Natural killer cell (primary cell): ENCODE measurements at regions of chr7 and their contacts with region 1.

Region 1: GRCh38 chr7:5622286-5622685 is 159.2 kb downstream of the RNF216 start:
- DNase-seq: no peak
- ATAC-seq: no peak
- H3K4me3 ChIP-seq: no peak overlapping the region
- H3K4me3 Mint-ChIP-seq: no peak overlapping the region
- H3K27ac ChIP-seq: no peak overlapping the region
- H3K27ac Mint-ChIP-seq: no peak overlapping the region
- H3K4me1 ChIP-seq: no peaks in the 10 kb centered on the region
- H3K4me1 Mint-ChIP-seq: peaks cover 0 to 7% of the 10 kb centered on the region in 2 donors
- H3K27me3 ChIP-seq: no peaks in the 10 kb centered on the region
- H3K27me3 Mint-ChIP-seq: no peaks in the 10 kb centered on the region
- CTCF ChIP-seq: no peak

Region 2: GRCh38 chr7:5441840-5442503 is 180.3 kb before region 1 on chr7:
- intact Hi-C with region 1: no loop called
- DNase-seq: no peak
- ATAC-seq: no peak
- H3K4me3 ChIP-seq: no peak overlapping the region
- H3K4me3 Mint-ChIP-seq: no peak overlapping the region
- H3K27ac ChIP-seq: no peak overlapping the region
- H3K27ac Mint-ChIP-seq: no peak overlapping the region
- H3K4me1 ChIP-seq: no peaks in the 10 kb centered on the region
- H3K4me1 Mint-ChIP-seq: no peaks in the 10 kb centered on the region
- H3K27me3 ChIP-seq: no peaks in the 10 kb centered on the region
- H3K27me3 Mint-ChIP-seq: no peaks in the 10 kb centered on the region
- CTCF ChIP-seq: no peak

Region 3: DNA sequence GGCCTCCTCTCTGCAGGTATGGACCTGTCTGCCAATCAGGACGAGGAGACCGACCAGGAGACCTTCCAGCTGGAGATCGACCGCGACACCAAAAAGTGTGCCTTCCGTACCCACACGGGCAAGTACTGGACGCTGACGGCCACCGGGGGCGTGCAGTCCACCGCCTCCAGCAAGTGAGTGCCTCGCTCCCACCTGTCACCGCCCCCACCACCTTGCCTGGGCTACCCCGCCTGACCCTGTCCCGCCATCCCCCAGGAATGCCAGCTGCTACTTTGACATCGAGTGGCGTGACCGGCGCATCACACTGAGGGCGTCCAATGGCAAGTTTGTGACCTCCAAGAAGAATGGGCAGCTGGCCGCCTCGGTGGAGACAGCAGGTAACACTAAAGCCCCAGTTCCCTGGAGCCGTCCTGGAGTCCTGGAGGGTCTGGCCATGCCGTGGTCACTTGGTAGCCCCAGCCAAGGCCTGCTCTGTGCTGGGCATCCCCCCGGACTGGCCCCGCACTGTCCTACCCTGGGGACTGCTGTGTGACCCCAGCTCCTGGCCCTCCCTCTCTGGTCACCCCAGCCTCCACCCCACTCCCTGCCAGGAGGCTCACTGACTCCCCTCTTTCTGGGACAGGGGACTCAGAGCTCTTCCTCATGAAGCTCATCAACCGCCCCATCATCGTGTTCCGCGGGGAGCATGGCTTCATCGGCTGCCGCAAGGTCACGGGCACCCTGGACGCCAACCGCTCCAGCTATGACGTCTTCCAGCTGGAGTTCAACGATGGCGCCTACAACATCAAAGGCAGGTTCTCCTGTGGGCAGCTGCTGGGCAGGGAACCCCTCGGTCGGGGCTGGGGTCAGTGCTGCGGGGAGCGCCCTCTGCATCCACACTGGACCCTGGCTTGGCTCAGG is 18.8 kb before region 1 on chr7:
- intact Hi-C with region 1: loop called (anchors 1 kb)
- DNase-seq: no peak
- ATAC-seq: no peak
- H3K4me3 ChIP-seq: no peak overlapping the region
- H3K4me3 Mint-ChIP-seq: no peak overlapping the region
- H3K27ac ChIP-seq: no peak overlapping the region
- H3K27ac Mint-ChIP-seq: no peak overlapping the region
- H3K4me1 ChIP-seq: no peaks in the 10 kb centered on the region
- H3K4me1 Mint-ChIP-seq: no peaks in the 10 kb centered on the region
- H3K27me3 ChIP-seq: no peaks in the 10 kb centered on the region
- H3K27me3 Mint-ChIP-seq: no peaks in the 10 kb centered on the region
- CTCF ChIP-seq: no peak

Region 4: DNA sequence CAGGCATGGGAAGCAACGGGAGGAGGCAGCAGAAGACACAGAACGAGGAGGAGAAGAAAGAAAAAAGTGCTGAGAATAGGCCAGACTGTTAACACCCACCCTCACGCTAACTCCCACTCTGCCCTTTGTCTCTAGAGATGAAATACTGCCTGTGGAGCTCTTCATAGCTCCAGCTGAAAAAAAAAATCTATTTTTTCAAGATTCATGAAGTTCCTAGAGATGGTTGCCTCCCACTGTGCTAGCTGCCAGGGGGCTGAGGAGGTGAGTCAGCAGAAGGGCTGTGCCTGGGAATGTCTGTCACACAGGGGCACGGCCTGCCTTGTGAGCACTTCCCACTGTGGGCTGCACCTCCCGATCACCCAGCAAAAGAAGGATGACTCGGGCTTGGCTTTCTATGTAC is 14.6 kb after region 1 on chr7:
- intact Hi-C with region 1: no loop called
- DNase-seq: no peak
- ATAC-seq: no peak
- H3K4me3 ChIP-seq: no peak overlapping the region
- H3K4me3 Mint-ChIP-seq: no peak overlapping the region
- H3K27ac ChIP-seq: no peak overlapping the region
- H3K27ac Mint-ChIP-seq: no peak overlapping the region
- H3K4me1 ChIP-seq: peaks cover 12% of the 10 kb centered on the region
- H3K4me1 Mint-ChIP-seq: peaks cover 4 to 14% of the 10 kb centered on the region in 2 donors
- H3K27me3 ChIP-seq: no peaks in the 10 kb centered on the region
- H3K27me3 Mint-ChIP-seq: no peaks in the 10 kb centered on the region
- CTCF ChIP-seq: no peak

Region 5: GRCh38 chr7:5665094-5666025 is 43.1 kb after region 1 on chr7:
- intact Hi-C with region 1: no loop called
- DNase-seq: peak; percentile 52 to 87
- ATAC-seq: peak; percentile 50 to 73 (median 52)
- H3K4me3 ChIP-seq: no peak overlapping the region
- H3K4me3 Mint-ChIP-seq: no peak overlapping the region
- H3K27ac ChIP-seq: no peak overlapping the region
- H3K27ac Mint-ChIP-seq: no peak overlapping the region
- H3K4me1 ChIP-seq: peaks cover 29% of the 10 kb centered on the region
- H3K4me1 Mint-ChIP-seq: peaks cover 22 to 24% of the 10 kb centered on the region in 2 donors
- H3K27me3 ChIP-seq: no peaks in the 10 kb centered on the region
- H3K27me3 Mint-ChIP-seq: no peaks in the 10 kb centered on the region
- CTCF ChIP-seq: peak; percentile 85

Region 6: GRCh38 chr7:6049780-6050179 is 427.5 kb after region 1 on chr7:
- intact Hi-C with region 1: no loop called
- DNase-seq: no peak
- ATAC-seq: no peak
- H3K4me3 ChIP-seq: no peak overlapping the region
- H3K4me3 Mint-ChIP-seq: no peak overlapping the region
- H3K27ac ChIP-seq: no peak overlapping the region
- H3K27ac Mint-ChIP-seq: no peak overlapping the region
- H3K4me1 ChIP-seq: no peaks in the 10 kb centered on the region
- H3K4me1 Mint-ChIP-seq: peaks cover 0 to 2% of the 10 kb centered on the region in 2 donors
- H3K27me3 ChIP-seq: no peaks in the 10 kb centered on the region
- H3K27me3 Mint-ChIP-seq: no peaks in the 10 kb centered on the region
- CTCF ChIP-seq: no peak